ENCODE measurements at regions of chr6 and their contacts with region 1.

Region 1: DNA sequence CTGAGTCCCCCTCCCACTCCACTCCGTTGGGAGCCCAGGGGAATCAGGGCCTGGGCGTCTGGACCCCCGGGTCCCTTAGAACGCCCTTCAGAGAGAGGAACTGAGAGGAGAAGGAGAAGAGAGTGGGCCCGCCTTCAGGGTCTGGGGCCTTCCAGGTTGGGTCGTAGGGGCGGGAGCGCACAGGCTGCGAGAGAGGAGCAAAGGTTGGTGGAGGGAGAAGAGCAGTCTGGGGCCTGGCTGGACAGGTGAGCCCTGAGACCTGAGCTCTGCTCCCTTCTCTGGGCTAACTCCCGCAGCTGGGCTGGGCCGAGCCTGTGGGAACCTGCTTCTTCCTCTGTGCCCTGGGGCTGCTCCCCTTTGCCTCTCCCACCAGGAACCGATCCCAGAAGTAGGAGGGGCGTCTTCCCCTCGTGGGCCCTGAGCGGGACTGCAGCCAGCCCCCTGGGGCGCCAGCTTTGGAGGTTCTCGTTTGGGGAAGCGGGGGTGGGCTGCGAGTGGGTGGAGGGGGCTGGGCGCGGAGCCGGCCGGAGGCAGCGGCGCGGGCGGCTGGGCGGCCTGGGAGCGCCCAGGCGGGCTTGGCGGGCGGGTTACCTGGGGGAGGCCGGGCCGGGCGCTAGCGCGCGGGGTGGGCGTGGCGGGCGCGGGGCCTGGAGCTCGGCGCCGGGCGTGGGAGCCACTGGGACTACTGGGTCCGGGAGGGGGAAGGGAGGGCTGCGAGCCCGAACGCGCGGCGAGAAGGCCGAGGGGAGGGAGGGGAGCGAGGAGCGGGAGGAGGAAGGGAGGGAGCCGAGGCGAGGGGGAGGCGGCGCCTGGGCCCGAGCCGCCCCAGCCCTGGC is at the start of gene DDR1:
- DNase-seq: peak; percentile 49 to 58
- ATAC-seq: peak; percentile 37 to 40
- H3K4me3 ChIP-seq: peak within 1 kb of the TSS; percentile 98
- H3K27ac ChIP-seq: peak within 1 kb of the TSS; percentile 99
- H3K4me1 ChIP-seq: peaks cover 40% of the 10 kb centered on the region
- CTCF ChIP-seq: no peak
- EP300 ChIP-seq: no peak
- POLR2A ChIP-seq: 0 out of 2 replicates have a peak, but pooled peaks have one; percentile 14
- RAD21 ChIP-seq: no peak
- polyA plus RNA-seq, gene DDR1: 19.8 and 25.8 TPM in 2 replicates

Region 2: DNA sequence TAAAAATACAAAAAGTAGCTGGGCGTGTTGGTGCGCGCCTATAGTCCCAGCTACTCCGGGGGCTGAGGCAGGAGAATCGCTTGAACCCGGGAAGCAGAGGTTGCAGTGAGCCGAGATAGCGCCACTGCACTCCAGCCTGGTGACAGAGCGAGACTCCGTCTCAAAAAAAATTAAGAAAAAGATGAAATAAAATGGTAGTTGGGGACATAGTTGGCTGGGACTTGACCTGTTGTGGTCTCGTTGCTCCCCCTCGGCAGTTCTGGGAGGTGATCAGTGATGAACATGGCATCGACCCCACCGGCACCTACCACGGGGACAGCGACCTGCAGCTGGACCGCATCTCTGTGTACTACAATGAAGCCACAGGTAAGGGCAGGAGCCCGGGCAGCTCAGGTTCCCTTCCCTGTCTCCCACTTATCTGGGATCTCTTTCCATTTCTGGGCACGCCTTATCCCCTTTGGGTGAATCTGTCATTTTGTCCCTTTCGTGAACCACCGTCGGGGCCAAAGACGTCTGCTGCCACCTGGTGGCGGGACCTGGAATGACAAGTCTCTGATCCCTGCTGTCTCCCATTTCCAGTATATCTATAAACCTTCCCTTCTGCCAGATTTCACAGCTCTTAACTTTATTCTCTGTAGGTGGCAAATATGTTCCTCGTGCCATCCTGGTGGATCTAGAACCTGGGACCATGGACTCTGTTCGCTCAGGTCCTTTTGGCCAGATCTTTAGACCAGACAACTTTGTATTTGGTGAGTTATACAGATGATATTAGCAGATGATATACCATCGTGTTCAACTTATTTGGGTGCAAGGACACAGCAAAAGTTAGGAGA is 161.4 kb before region 1 on chr6:
- CTCF ChIA-PET with region 1: interaction called, 10 read pairs
- POLR2A ChIA-PET with region 1: interaction called, 4 read pairs
- DNase-seq: peak; percentile 56 to 73
- ATAC-seq: no peak
- H3K4me3 ChIP-seq: peak overlapping the region; percentile 98
- H3K27ac ChIP-seq: peak overlapping the region; percentile 99 to 100
- H3K4me1 ChIP-seq: peaks cover 58% of the 10 kb centered on the region
- CTCF ChIP-seq: peak; percentile 79
- EP300 ChIP-seq: no peak
- POLR2A ChIP-seq: no peak
- RAD21 ChIP-seq: peak; percentile 64 to 73

Region 3: DNA sequence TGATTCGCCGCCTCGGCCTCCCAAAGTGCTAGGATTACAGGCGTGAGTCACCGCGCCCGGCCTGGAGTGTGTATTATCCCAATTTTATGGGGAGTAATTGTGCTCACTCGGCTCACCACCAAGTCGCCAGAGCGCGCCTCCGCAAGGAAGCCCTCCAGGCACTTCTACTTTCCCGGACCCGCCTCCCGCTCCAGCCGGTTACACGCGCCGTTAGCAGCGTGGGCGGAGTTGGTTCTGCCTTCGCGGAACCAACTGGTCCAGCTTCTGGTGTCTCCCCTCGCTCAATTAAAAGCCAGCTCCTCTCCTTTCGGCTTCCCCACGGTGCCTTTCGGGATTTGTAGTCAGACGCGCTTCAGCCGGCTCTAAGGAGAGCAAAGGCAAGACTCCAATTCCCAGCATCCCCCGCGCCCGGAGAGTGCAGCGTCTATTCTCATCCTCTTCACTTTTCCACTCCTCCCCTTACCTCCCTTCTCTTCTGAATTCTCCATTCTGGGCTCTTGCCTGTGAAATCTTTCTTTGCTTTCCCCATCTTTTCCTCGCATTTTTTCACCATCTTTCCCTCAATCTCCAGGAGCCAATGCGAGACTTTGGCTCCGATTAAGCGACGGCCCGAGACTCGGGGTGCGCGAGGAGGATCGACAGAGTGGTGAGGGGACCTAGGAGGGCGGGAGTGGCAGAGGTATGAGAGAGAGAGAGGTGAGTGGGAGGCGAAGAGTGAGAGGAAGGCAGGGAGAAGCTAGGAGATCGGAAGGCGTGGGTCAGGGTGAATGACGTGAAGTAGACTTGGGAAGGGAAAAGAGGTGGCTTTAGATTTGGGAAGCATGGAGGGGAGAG is 24.1 kb after region 1 on chr6 and contains the start of gene GTF2H4:
- CTCF ChIA-PET with region 1: interaction called, 6 read pairs
- POLR2A ChIA-PET with region 1: interaction called, 10 read pairs
- DNase-seq: peak; percentile 87 to 97
- ATAC-seq: peak; percentile 99
- H3K4me3 ChIP-seq: peak within 1 kb of the TSS; percentile 94
- H3K27ac ChIP-seq: peak within 1 kb of the TSS; percentile 85 to 86
- H3K4me1 ChIP-seq: peaks cover 10% of the 10 kb centered on the region; the same call in 1 of the 3 replicates
- CTCF ChIP-seq: no peak
- EP300 ChIP-seq: no peak
- POLR2A ChIP-seq: no peak
- RAD21 ChIP-seq: no peak
- polyA plus RNA-seq, gene GTF2H4: 19.7 and 24.8 TPM in 2 replicates